CD8-positive, alpha-beta T cell (primary cell): ENCODE measurements at regions of chr5 and their contacts with region 1.

Region 1: GRCh38 chr5:139517683-139518564 is 35.4 kb upstream of the STING1 start:
- DNase-seq: peak; percentile 82 to 97 (median 90)
- ATAC-seq: peak; percentile 92
- H3K4me3 ChIP-seq: peak overlapping the region; percentile 58 to 63
- H3K4me3 Mint-ChIP-seq: peak overlapping the region; percentile 88
- H3K27ac ChIP-seq: peak overlapping the region; percentile 60 to 79
- H3K27ac Mint-ChIP-seq: peak overlapping the region; percentile 96
- H3K4me1 ChIP-seq: peaks cover 11% of the 10 kb centered on the region
- H3K4me1 Mint-ChIP-seq: peaks cover 23% of the 10 kb centered on the region
- H3K27me3 ChIP-seq: no peaks in the 10 kb centered on the region
- H3K27me3 Mint-ChIP-seq: no peaks in the 10 kb centered on the region
- CTCF ChIP-seq: peak; percentile 96

Region 2: DNA sequence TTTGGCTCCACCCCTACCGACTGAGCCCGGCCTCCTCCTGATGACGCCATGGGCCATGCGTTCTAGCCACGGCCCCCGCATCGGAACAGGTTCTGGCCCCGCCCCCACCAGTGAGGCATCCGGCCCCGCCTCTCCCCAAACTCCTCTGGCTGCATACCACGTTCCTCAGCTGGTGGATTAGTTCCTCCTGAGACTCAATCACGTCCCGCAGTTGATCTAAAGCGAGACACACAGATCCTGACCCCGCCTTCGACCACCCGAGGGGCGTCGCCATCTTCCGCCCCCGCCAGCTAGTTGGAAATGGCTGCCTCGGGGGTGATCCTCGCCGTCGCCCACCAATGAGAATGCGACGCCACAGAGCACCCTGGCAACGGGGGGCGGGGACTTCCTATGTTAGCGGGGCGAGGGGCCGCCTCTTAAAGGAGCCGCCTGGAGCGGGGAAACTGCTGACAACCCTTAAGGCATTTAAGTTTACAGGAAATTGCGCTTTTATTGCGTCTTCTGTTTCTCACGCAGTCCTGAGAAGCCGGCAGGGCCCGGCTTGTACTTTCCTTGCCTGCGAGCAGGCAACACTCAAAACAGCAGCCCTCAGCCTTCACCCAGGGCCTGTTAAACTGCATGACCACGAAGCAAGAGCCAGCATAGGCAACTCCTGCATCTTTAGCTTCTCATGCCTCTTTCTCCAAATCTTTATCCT is 114.0 kb before region 1 on chr5 and contains the start of gene SPATA24:
- CTCF ChIA-PET with region 1: interaction called, 12 read pairs
- POLR2A ChIA-PET with region 1: no interaction called
- intact Hi-C with region 1: no loop called
- DNase-seq: peak; percentile 93 to 99 (median 98)
- ATAC-seq: peak; percentile 88
- H3K4me3 ChIP-seq: peak within 1 kb of the TSS; percentile 61
- H3K4me3 Mint-ChIP-seq: peak within 1 kb of the TSS; percentile 95
- H3K27ac ChIP-seq: peak within 1 kb of the TSS; percentile 68 to 94
- H3K27ac Mint-ChIP-seq: peak within 1 kb of the TSS; percentile 99
- H3K4me1 ChIP-seq: peaks cover 16% of the 10 kb centered on the region
- H3K4me1 Mint-ChIP-seq: peaks cover 32% of the 10 kb centered on the region
- H3K27me3 ChIP-seq: no peaks in the 10 kb centered on the region
- H3K27me3 Mint-ChIP-seq: no peaks in the 10 kb centered on the region
- CTCF ChIP-seq: no peak
- total RNA-seq, gene SPATA24: 2.2 to 3.0 TPM

Region 3: DNA sequence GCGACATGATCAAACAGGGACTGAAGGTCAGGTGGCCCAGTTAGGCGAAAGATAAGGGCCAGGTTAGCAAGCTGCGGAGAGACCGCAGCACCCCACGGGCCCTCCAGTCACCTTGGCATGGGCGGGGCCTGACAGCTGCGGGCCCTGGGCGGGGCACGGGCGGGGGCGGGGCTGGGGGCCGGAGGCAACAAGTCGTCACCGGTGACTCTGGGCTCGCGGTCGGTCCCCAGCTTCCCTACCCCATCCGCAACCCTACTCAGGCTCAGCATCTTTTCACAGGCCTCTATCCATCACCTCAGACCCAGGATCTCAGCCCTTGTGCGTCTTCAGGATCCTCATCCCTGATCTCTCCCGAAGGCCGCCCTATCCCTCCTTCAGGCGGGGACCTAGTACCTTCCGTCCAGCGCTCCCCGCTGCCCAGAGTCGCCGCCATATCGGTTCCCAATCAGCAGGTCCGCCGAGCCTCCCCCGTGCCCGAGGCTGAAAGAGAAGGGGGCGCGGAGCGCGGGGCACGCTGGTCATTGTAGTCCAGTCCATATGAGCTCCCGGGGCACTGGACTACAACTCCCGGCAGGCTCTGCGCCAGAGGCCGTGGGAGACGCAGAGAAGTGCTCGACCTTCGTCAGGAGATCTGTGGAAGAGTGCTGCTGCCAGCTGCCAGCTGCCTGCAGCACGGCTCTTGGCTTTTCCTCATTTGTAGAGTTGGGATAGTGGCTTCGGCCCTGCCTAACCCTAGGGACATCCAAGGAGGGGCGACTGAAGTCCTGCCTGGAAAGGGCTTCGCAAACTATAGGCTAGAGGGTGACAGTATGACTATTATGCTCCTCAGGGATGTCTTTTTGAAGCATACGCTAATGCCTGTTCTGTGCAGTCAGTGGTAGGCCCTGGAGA is 78.7 kb before region 1 on chr5 and contains the start of gene DNAJC18:
- CTCF ChIA-PET with region 1: interaction called, 11 read pairs
- POLR2A ChIA-PET with region 1: interaction called, 6 read pairs
- intact Hi-C with region 1: no loop called
- DNase-seq: peak; percentile 78 to 93 (median 90)
- ATAC-seq: peak; percentile 88
- H3K4me3 ChIP-seq: peak within 1 kb of the TSS; percentile 95 to 98
- H3K4me3 Mint-ChIP-seq: peak within 1 kb of the TSS; percentile 98
- H3K27ac ChIP-seq: peak within 1 kb of the TSS; percentile 97 to 98
- H3K27ac Mint-ChIP-seq: peak within 1 kb of the TSS; percentile 99
- H3K4me1 ChIP-seq: peaks cover 24% of the 10 kb centered on the region
- H3K4me1 Mint-ChIP-seq: peaks cover 33% of the 10 kb centered on the region
- H3K27me3 ChIP-seq: no peaks in the 10 kb centered on the region
- H3K27me3 Mint-ChIP-seq: no peaks in the 10 kb centered on the region
- CTCF ChIP-seq: no peak
- total RNA-seq, gene DNAJC18: 8.0 to 10.2 TPM

Region 4: DNA sequence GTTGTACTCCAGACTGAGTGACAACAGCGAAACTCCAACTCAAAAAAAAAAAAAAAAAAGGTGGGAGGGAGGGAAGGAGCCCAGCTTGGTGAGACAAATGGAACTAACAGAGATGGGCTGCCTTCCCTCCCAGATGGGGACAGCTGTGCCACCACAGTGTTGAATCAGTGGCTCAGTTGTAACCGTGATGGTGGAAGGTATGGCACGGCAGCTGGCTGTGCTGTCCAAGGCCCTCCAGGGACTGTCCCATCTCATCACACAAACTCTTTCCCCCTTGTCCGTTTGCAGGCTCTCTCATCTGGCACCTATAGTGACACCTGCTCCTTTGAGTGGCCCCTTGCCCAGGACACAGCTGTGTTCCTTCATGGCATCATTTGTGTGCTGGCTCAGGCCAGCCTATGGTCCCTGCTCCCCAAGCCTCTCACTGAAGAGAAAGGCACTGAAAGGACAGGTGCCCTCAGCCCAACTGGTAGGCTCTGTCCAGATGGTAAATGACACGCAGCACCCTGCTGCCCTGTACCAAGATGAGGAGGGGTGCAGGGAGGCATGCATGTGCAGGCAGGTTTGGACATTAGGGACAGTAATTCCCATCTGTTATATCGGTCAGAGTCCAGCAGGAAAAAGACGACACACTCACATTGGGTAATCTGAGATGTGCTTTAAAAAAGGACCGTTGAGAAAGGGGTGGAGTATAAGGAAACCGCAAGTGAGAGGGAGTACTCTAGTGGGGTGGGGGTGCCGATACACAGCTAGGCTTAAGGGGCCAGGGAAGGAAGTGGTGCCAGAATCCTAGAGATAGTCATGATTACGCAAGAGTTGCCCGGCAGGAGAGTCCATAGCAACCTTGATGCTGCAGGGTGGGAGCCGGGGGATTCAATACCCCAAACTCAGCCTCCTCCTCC is 42.8 kb before region 1 on chr5:
- CTCF ChIA-PET with region 1: interaction called, 12 read pairs
- POLR2A ChIA-PET with region 1: no interaction called
- intact Hi-C with region 1: loop called in 1 of 2 experiments (anchors 5 kb)
- DNase-seq: peak in 3 of 9 experiments; percentile 25 to 60 (median 39)
- ATAC-seq: peak; percentile 66
- H3K4me3 ChIP-seq: no peak overlapping the region
- H3K4me3 Mint-ChIP-seq: peak overlapping the region; percentile 68
- H3K27ac ChIP-seq: peak overlapping the region in 1 of 2 experiments; percentile 36
- H3K27ac Mint-ChIP-seq: peak overlapping the region; percentile 82
- H3K4me1 ChIP-seq: peaks cover 67% of the 10 kb centered on the region
- H3K4me1 Mint-ChIP-seq: peaks cover 66% of the 10 kb centered on the region
- H3K27me3 ChIP-seq: no peaks in the 10 kb centered on the region
- H3K27me3 Mint-ChIP-seq: no peaks in the 10 kb centered on the region
- CTCF ChIP-seq: no peak

Region 5: GRCh38 chr5:139560752-139561654 is 43.1 kb after region 1 on chr5 and contains the start of gene UBE2D2:
- CTCF ChIA-PET with region 1: interaction called, 14 read pairs
- POLR2A ChIA-PET with region 1: interaction called, 4 read pairs
- intact Hi-C with region 1: loop called (anchors 1 to 2 kb)
- DNase-seq: peak; percentile 96 to 99 (median 97)
- ATAC-seq: peak; percentile 84
- H3K4me3 ChIP-seq: peak within 1 kb of the TSS; percentile 84 to 91
- H3K4me3 Mint-ChIP-seq: peak within 1 kb of the TSS; percentile 93
- H3K27ac ChIP-seq: peak within 1 kb of the TSS; percentile 87 to 89
- H3K27ac Mint-ChIP-seq: peak within 1 kb of the TSS; percentile 97
- H3K4me1 ChIP-seq: peaks cover 30% of the 10 kb centered on the region
- H3K4me1 Mint-ChIP-seq: peaks cover 35% of the 10 kb centered on the region
- H3K27me3 ChIP-seq: no peaks in the 10 kb centered on the region
- H3K27me3 Mint-ChIP-seq: no peaks in the 10 kb centered on the region
- CTCF ChIP-seq: no peak
- total RNA-seq, gene UBE2D2: 180 TPM

Region 6: DNA sequence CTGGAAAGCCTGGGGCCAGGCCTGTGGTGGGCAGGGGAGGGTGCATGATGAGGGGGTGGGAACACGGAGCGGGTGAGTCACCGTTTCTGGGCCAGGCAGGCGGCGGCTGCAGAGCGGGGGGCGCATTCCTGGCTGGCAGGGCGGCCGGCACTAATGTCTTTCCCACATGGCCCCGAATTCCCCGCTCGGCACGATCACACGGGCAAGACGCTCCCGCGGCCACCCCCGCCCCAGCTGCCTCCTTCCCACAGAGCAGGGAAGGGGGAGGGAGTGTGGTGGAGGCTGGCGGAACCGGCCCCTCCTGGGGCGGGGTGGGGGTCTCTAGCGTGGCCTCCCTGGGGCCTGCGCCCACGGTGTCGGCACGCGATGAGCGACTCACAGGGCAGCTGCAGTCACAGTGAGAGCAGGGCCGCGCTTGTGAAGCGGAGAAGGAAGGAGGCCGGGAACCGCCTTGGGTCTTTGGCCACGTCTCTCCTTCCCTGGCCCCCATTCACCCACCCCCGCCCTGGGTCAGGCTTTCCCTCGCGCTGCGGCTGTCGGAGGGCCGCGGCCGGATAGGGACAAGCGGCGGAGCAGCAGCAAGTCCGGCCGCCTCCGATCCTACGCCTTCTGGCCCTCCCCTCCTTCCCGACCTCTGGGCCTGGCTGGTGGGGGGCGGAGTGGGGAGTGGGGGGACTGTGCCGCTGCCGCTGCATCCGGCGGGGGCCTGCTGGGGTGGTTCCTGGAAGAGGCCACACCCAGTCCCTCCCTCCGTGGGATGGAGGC is 179.2 kb after region 1 on chr5:
- CTCF ChIA-PET with region 1: interaction called, 4 read pairs
- POLR2A ChIA-PET with region 1: no interaction called
- intact Hi-C with region 1: loop called in 1 of 2 experiments (anchors 10 kb)
- DNase-seq: peak in 5 of 9 experiments; percentile 14 to 47 (median 35)
- ATAC-seq: peak; percentile 50
- H3K4me3 ChIP-seq: peak overlapping the region; percentile 42 to 45
- H3K4me3 Mint-ChIP-seq: peak overlapping the region; percentile 80
- H3K27ac ChIP-seq: no peak overlapping the region
- H3K27ac Mint-ChIP-seq: no peak overlapping the region
- H3K4me1 ChIP-seq: peaks cover 34% of the 10 kb centered on the region
- H3K4me1 Mint-ChIP-seq: peaks cover 35% of the 10 kb centered on the region
- H3K27me3 ChIP-seq: peaks cover 0 to 9% of the 10 kb centered on the region in 2 experiments
- H3K27me3 Mint-ChIP-seq: peaks cover 6% of the 10 kb centered on the region
- CTCF ChIP-seq: no peak

Region 7: DNA sequence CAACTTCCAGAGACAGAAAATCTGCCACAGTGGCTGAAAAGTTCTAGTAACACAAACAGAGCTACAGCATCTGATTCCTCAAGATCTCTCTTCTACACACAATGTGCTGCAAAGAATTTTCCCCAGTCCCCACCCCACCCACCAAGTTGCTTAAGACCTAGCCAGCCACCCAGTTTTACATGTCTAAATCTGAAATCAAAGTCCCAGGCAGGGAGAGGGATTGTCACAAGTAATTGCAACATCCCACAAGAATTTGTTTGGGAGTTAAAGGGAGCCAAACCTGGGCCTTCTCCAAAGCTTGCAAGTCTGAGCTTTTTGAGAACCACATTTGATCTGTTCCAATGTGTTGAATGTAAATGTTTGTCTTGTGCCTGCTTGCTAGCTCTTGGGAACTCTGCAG is 623.3 kb after region 1 on chr5:
- CTCF ChIA-PET with region 1: no interaction called
- POLR2A ChIA-PET with region 1: no interaction called
- intact Hi-C with region 1: no loop called
- DNase-seq: no peak
- ATAC-seq: no peak
- H3K4me3 ChIP-seq: no peak overlapping the region
- H3K4me3 Mint-ChIP-seq: no peak overlapping the region
- H3K27ac ChIP-seq: no peak overlapping the region
- H3K27ac Mint-ChIP-seq: no peak overlapping the region
- H3K4me1 ChIP-seq: peaks cover 18% of the 10 kb centered on the region
- H3K4me1 Mint-ChIP-seq: peaks cover 25% of the 10 kb centered on the region
- H3K27me3 ChIP-seq: peaks cover 3 to 8% of the 10 kb centered on the region in 2 experiments
- H3K27me3 Mint-ChIP-seq: peaks cover 11% of the 10 kb centered on the region
- CTCF ChIP-seq: no peak